ENCODE measurements at regions of chr9 and their contacts with region 1.

Region 1: DNA sequence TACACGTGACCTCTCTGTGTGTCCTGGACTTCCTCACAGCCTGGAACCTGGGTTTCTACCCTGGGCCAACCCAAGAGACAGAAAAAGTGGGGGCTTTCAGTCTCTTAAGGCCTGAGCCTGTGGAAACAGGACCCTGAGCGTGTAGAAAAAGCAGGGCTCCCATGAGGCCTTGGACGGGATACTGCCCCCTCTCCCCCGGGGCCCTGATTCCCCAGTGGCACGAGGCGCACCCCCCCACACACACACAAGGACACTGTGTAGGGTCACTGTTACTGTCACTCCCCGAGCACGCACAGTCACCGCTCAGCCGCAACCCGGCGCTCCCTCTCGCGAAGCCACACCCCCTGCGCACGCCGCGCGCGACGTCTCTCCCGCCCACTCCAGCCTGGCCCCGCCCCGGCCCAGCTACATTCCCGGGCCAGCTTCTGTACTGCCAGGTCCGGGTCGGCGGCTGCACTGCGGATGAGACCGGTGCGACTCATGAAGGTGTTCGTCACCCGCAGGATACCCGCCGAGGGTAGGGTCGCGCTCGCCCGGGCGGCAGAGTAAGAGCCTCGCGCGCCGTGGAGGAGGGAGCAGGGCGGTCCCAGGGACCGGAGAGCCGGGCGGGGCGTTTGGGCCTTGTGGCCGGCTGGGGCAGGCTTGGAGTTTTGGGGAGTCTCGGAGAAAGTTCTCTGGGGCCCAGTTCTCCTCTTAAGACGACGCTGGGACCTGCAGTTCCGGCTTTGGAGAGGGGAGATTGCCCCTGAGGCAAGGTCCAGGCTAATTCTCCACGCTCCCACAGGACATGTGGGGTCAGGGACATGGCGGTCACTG is at the start of gene GRHPR:
- DNase-seq: peak; percentile 91 to 96 (median 94)
- ATAC-seq: peak; percentile 93 to 99 (median 98)
- H3K4me3 ChIP-seq: peak within 1 kb of the TSS; percentile 61 to 98 (median 83)
- H3K27ac ChIP-seq: peak within 1 kb of the TSS; percentile 61 to 96 (median 89)
- H3K4me1 ChIP-seq: peaks cover 0 to 33% (median 28%) of the 10 kb centered on the region in 12 donors
- H3K27me3 ChIP-seq: no peaks in the 10 kb centered on the region
- CTCF ChIP-seq: no peak
- POLR2A ChIP-seq: peak in 1 of 2 donors; percentile 88
- total RNA-seq, gene GRHPR: 94.9 to 209 (median 111) TPM

Region 2: DNA sequence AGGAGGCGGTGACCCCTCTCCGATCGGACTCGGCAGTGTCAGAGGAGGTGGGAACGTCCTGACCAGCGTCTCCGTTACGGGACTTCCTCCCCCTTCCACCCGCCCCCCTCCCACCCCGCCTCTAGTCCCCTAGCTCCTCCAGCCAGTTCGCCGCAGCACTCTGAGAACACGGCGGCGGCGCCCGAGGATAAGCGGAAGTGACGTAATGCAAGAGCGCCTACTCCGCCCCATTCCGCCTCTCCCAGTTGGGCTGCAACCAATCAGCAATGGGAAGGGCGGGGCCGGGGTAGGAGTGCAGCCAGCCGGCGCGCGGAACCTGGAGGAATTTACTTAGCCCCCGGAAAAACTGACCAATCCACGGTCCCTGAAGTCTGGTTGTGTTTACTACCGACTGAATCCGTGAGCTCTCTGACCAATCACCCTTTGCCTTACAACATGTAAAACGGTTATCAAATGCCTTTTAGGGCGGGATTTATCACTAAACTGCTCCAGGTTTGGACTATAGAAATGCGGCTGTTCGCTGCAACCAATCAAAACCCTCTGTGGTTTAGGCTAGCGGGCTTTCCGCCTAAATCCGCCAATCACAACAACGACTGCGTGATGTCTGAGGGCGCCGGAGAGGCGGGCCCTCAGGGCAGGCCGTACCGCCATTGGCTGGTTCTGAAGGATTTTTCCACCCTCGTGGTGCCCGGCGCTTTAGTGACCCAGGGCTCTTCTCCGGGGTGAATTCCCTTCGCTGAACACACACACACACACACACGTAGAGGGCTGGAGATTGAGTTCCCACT is 42.9 kb after region 1 on chr9 and contains the start of gene ZBTB5:
- intact Hi-C with region 1: loop called in 8 of 10 experiments (anchors 1 to 5 kb)
- DNase-seq: peak; percentile 99 to 100 (median 99)
- ATAC-seq: peak; percentile 89 to 93 (median 92)
- H3K4me3 ChIP-seq: peak within 1 kb of the TSS; percentile 68 to 99 (median 92)
- H3K27ac ChIP-seq: peak within 1 kb of the TSS; percentile 86 to 99 (median 97)
- H3K4me1 ChIP-seq: peaks cover 0 to 40% (median 25%) of the 10 kb centered on the region in 12 donors
- H3K27me3 ChIP-seq: no peaks in the 10 kb centered on the region
- CTCF ChIP-seq: no peak
- POLR2A ChIP-seq: peak in 1 of 2 donors; percentile 92
- total RNA-seq, gene ZBTB5: 5.2 to 8.0 (median 6.3) TPM

Region 3: DNA sequence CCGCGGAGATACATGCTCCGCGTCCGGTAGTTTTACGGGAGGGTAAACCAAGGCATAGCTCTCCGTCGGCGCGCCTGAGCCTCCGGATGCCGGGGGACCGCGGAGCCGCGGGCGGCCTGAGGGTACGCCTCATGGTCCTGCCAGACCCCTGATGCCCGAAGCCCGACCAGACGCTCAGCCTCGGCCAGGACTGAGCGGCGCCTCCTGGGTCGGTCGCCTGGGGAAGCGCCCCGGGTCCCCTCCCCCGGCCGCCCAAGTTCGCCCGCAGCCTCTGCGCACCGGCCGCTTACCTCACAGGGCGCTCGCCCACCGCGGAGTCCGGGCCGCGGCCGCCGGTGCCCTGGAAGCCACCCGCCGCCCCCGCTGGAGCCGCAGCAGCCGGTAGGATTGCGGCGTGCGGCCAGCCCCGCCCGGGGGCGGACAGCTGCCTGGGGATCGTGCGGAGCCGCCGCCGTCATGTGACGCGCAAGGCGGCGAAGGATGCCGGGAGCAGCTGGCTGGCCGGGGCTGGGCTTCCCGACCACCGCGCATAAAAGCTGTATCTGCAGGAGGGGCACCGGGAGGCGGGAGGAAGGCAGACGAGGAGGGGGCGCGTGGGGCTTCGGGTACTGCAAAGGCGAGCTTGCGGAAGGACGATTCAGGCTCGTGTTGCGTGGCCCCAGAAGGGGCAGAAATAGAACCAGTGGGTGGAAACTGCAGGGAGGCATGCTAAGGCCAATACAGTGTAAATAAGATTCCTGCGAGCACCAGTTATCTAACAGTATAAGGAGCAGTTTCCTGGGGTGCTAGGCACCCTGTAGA is 153.6 kb after region 1 on chr9 and contains the start of gene FBXO10:
- intact Hi-C with region 1: loop called in 1 of 10 experiments (anchors 10 kb)
- DNase-seq: peak; percentile 69 to 86 (median 78)
- ATAC-seq: peak; percentile 81 to 97 (median 95)
- H3K4me3 ChIP-seq: peak within 1 kb of the TSS; percentile 68 to 98 (median 82)
- H3K27ac ChIP-seq: peak within 1 kb of the TSS; percentile 27 to 90 (median 80)
- H3K4me1 ChIP-seq: peaks cover 0 to 24% (median 18%) of the 10 kb centered on the region in 12 donors
- H3K27me3 ChIP-seq: no peaks in the 10 kb centered on the region
- CTCF ChIP-seq: peak in 1 of 12 donors; percentile 4
- POLR2A ChIP-seq: peak in 1 of 2 donors; percentile 64
- total RNA-seq, gene FBXO10: 5.5 to 9.8 (median 7.3) TPM

Measured in heart left ventricle (tissue), 16 donors.